ENCODE measurements at regions of chr17 and their contacts with region 1.

Region 1: DNA sequence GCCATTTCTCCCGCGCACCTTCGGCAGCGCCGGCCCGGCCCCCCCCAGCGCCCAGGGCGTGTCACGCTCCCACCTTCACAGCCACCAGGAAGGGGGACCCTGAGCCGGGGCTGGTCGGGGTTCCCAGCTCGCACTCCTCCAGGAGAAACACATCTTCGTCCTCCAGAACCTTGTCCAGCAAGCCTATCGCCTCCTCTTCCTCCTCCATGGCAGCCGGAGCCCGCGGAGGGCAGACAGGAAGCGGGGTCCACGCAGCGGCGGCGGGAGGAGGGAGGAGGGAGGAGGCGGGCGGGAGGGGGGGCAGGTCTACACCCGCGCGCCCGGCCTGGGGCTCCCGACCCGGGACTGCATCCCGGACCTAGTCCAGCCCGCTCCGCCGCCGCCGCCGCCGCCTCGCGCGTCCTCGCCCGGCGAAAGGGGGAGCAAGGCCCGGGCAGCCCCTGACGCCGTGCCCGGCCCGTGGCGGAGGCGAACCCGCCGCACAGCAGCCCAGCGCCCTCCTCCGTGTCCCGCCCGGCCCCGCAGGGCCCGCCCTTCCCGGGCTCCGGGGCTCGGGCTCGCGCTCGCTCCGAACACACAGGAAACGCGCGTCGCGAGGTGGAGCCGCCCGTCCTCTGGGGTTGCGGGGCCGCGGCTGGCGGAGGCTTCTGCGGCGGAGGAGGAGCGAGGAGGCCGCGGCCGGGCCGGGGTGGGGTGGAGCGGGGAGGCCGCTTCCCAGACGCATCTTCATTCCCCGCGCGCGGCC is 70.7 kb downstream of the ABR start:
- DNase-seq: peak; percentile 62 to 79 (median 76)
- ATAC-seq: peak; percentile 85
- H3K4me3 ChIP-seq: peak overlapping the region; percentile 71
- H3K4me3 Mint-ChIP-seq: peak overlapping the region; percentile 78 to 92 (median 86)
- H3K27ac ChIP-seq: peak overlapping the region; percentile 71
- H3K27ac Mint-ChIP-seq: peak overlapping the region in 8 of 9 donors; percentile 51 to 92 (median 86)
- H3K4me1 ChIP-seq: peaks cover 9 to 22% of the 10 kb centered on the region in 2 donors
- H3K4me1 Mint-ChIP-seq: peaks cover 16 to 47% (median 35%) of the 10 kb centered on the region in 7 donors
- H3K27me3 ChIP-seq: no peaks in the 10 kb centered on the region
- H3K27me3 Mint-ChIP-seq: no peaks in the 10 kb centered on the region

Region 2: DNA sequence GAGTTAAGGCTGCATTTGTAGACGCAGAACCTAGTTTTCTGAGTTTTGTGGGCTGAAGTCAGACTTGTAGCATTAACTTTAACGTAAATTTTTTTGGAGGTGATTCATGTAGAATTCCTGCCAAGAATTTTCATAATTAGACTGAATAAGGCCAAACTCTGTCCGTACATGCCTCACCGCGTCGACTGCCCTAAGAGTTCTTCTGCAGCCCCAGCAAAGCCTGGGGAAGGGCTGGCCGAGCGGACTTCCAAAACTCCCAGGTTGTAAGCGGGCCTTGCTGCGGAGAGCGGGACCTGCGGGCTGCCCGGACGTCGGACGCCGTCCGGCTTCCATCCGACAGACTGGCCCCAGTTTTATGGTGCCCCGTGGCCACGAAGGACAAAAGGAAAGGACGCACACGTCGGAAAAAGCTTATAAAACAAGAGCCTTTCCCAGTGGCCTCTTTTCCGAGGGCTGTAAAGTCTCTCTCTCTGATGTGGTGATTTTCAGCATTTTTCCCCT is 205.0 kb before region 1 on chr17:
- CTCF ChIA-PET with region 1: no interaction called
- POLR2A ChIA-PET with region 1: no interaction called
- intact Hi-C with region 1: no loop called
- DNase-seq: no peak
- ATAC-seq: no peak
- H3K4me3 ChIP-seq: no peak overlapping the region
- H3K4me3 Mint-ChIP-seq: no peak overlapping the region
- H3K27ac ChIP-seq: no peak overlapping the region
- H3K27ac Mint-ChIP-seq: no peak overlapping the region
- H3K4me1 ChIP-seq: no peaks in the 10 kb centered on the region
- H3K4me1 Mint-ChIP-seq: peaks cover 0 to 3% (median 0%) of the 10 kb centered on the region in 7 donors
- H3K27me3 ChIP-seq: no peaks in the 10 kb centered on the region
- H3K27me3 Mint-ChIP-seq: peaks cover 34 to 66% (median 52%) of the 10 kb centered on the region in 5 donors

Region 3: DNA sequence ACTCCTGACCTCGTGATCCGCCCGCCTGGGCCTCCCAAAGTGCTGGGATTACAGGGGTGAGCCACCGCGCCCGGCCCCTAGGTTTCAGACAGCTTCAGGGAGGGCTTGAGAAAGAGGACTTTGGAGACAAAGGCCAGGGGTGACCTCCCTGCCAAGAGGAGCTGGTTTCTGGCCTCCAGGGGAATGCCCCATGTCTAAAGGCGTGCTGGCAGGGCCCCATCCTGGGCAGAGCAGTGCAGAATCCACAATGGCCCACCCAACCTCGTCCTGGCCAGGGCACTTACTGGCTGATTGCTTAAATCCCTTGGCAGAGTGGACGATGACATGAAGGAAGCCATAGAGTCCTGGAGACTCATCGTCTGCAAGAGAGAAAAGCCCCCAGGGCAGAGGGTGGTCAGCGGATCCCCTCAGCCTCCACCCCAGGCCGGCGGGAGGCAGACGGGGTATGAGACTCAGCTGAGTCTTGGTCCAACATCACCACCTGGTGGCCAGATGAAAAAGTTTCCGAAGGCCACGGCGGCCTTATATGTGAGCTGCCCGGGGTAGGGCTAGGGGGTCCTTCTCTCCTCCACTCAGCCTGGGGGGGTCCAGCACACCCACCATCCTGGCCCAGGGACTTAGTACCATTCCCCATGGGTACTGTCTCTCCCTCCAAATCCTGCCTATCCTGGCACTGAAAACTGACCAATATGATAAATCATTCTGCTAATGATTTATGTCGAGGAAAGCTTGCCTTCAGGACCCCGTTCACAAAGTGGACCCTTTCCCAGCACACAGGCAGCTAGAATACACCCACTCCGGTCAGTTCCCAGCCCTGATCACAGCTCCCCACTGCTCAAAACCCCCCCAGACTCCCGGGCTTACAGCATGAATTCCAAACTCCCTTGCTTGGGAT is 53.0 kb before region 1 on chr17:
- CTCF ChIA-PET with region 1: no interaction called
- POLR2A ChIA-PET with region 1: no interaction called
- intact Hi-C with region 1: loop called in 1 of 2 experiments (anchors 10 kb)
- DNase-seq: peak in 6 of 9 donors; percentile 16 to 42 (median 31)
- ATAC-seq: peak; percentile 74
- H3K4me3 ChIP-seq: no peak overlapping the region
- H3K4me3 Mint-ChIP-seq: no peak overlapping the region
- H3K27ac ChIP-seq: no peak overlapping the region
- H3K27ac Mint-ChIP-seq: peak overlapping the region in 2 of 9 donors; percentile 21 to 78
- H3K4me1 ChIP-seq: no peaks in the 10 kb centered on the region
- H3K4me1 Mint-ChIP-seq: peaks cover 0 to 4% (median 0%) of the 10 kb centered on the region in 7 donors
- H3K27me3 ChIP-seq: no peaks in the 10 kb centered on the region
- H3K27me3 Mint-ChIP-seq: no peaks in the 10 kb centered on the region

Region 4: DNA sequence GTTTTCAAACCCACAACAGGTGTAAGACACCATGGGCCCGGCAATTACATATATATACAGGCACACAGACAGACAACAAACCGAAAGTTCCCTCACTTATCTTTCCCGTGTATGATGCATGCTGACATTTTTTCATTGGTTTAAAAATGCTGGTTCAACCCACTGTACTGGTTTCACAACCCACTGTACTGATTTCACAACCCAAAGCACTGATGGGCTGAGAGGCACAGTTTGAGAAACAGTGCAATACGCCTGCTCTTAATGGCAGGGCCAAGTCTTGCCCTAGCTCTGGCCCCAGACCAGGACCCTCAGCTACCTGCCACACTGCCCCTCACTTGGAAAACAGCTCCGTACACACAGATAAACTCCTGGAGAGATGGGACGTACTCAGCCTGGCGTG is 10.6 kb before region 1 on chr17:
- CTCF ChIA-PET with region 1: interaction called, 3 read pairs
- POLR2A ChIA-PET with region 1: interaction called, 17 read pairs
- intact Hi-C with region 1: loop called in 1 of 2 experiments (anchors 1 kb)
- DNase-seq: no peak
- ATAC-seq: peak; percentile 60
- H3K4me3 ChIP-seq: no peak overlapping the region
- H3K4me3 Mint-ChIP-seq: no peak overlapping the region
- H3K27ac ChIP-seq: no peak overlapping the region
- H3K27ac Mint-ChIP-seq: peak overlapping the region in 4 of 9 donors; percentile 28 to 64 (median 56)
- H3K4me1 ChIP-seq: peaks cover 0 to 15% of the 10 kb centered on the region in 2 donors
- H3K4me1 Mint-ChIP-seq: peaks cover 17 to 40% (median 36%) of the 10 kb centered on the region in 7 donors
- H3K27me3 ChIP-seq: no peaks in the 10 kb centered on the region
- H3K27me3 Mint-ChIP-seq: no peaks in the 10 kb centered on the region